ENCODE measurements at regions of chr2 and their contacts with region 1.

Region 1: DNA sequence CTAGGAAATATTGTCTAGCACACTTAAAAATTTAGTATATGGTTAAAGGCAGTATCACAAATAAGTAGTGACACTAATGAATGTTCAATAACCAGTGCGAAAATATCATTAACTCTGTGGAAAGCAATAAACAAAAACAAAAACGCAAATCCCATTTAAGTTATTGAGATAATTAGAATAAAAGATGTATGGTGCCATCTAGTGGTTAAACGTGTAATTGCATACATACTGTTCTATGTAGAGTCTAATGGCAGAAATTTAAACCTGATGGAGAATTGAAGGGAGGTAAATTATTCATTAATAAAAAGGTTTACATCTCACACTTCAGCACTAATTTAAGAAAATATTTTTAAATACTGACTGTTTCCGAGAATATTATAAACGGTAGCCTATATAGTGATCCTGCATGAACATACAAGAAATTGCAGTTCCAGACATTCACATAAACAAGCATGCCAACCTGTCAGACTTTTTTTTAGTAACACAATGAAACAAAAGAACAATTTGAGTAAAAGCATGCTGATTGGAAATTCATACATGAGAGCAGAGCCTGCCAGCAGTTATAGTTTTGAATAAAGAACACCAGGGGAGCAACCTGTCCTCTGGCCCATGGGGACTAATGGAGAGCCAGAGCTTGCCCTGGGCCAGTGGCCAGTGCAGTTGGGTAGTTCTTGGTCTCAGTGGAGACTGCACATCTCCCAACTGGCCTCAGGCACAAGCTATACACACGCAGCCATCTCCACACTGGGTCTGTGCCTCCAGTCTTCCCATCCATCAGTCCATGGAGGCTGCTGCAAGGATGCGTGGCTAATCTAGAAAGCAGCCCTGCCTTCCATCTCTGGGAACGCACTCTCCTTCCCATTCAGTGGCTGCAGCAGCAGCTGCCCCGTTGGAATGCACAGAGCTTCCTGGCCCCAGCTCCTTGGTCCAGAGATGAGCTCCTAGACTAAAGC is 28.0 kb downstream of the GCG start:
- DNase-seq: no peak
- H3K4me3 ChIP-seq: no peak overlapping the region
- CTCF ChIP-seq: peak in 1 of 3 donors; percentile 37
- POLR2A ChIP-seq: no peak

Region 2: DNA sequence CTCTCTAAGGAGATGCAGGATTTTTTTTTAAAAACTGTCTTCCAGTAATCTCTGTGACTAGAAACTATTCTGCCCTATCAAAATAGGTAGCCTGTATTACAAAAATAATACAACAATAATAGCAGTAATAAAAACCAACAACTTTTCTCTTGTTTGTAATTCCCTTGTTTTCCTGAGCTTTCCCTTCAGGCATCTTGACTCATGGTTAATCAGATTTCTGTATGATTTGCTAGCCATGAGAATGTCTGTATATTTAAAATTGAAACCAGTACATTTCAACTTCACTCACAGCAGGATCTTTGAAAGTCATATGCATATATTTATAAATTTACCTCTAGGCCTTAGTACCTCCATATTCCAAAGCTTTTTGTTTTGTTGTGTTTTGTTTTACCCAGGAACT is 461.7 kb before region 1 on chr2:
- intact Hi-C with region 1: no loop called
- DNase-seq: no peak
- H3K4me3 ChIP-seq: no peak overlapping the region
- CTCF ChIP-seq: no peak
- POLR2A ChIP-seq: no peak

Region 3: DNA sequence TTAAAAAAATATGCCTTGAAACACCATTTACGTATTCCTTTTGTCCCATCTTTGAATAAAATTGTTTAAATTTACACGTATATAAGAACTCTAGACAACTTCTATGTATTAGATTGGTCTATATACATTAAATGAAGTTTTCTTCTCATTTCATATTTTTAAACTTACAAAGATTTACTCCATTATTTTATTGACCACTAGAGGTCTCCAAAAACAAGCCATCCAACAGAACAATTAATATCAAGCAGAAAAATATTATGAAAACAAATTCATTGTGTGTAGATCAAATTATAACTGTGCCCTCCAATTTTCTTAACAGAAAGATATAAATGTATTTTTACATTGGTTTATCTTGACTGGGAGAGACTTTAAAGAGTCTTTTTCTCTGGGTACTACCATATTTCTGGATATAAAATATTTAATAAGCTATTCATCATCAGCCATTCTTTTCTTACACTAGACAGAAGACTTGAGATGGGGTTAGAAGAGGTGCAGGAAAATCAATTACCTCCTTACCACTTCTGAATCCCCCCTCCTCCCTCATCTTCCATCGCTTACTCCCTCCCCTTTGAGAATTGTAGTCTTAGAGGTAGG is 116.5 kb before region 1 on chr2:
- intact Hi-C with region 1: loop called (anchors 10 kb)
- DNase-seq: no peak
- H3K4me3 ChIP-seq: no peak overlapping the region
- CTCF ChIP-seq: peak in 1 of 3 donors; percentile 43
- POLR2A ChIP-seq: no peak

Region 4: GRCh38 chr2:162267496-162267895 is 143.4 kb after region 1 on chr2:
- intact Hi-C with region 1: no loop called
- DNase-seq: no peak
- H3K4me3 ChIP-seq: no peak overlapping the region
- CTCF ChIP-seq: no peak
- POLR2A ChIP-seq: no peak

Region 5: GRCh38 chr2:162416446-162416845 is 292.4 kb after region 1 on chr2:
- intact Hi-C with region 1: no loop called
- DNase-seq: no peak
- H3K4me3 ChIP-seq: no peak overlapping the region
- CTCF ChIP-seq: no peak
- POLR2A ChIP-seq: no peak

Measured in lower leg skin (tissue), 4 donors.